ENCODE measurements at regions of chr6 and their contacts with region 1.

Region 1: DNA sequence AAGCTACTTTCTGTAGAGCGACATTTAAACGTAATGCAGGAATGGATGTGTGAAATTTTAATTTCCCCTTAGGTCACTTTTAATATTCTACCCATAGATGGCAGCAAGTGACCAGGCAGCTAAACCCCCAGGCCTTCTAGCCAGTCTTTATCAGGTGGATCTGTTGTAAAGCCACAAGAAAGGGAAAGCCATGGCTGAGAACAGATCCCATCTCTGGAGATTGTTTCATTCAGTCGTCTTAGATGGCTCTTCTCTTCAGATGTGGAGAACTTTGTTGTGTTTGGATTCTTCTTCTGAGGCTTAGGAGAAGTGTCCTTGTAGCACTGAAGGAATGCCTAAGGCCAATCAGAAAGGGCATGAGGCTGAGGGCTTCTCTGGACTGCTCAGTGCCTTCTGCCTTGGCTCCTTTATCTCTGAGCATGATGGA is 15.8 kb upstream of the RNF182 start:
- DNase-seq: peak; percentile 57 to 71 (median 67)
- H3K4me3 ChIP-seq: no peak overlapping the region
- H3K4me3 Mint-ChIP-seq: no peak overlapping the region
- H3K27ac ChIP-seq: no peak overlapping the region
- H3K27ac Mint-ChIP-seq: no peak overlapping the region
- H3K4me1 ChIP-seq: peaks cover 4% of the 10 kb centered on the region
- H3K4me1 Mint-ChIP-seq: peaks cover 0 to 6% (median 4%) of the 10 kb centered on the region in 4 donors
- H3K27me3 ChIP-seq: no peaks in the 10 kb centered on the region
- H3K27me3 Mint-ChIP-seq: peaks cover 18 to 21% of the 10 kb centered on the region in 2 donors

Region 2: GRCh38 chr6:13827032-13827431 is 81.9 kb before region 1 on chr6:
- CTCF ChIA-PET with region 1: no interaction called
- POLR2A ChIA-PET with region 1: no interaction called
- intact Hi-C with region 1: no loop called
- DNase-seq: no peak
- H3K4me3 ChIP-seq: no peak overlapping the region
- H3K4me3 Mint-ChIP-seq: no peak overlapping the region
- H3K27ac ChIP-seq: no peak overlapping the region
- H3K27ac Mint-ChIP-seq: no peak overlapping the region
- H3K4me1 ChIP-seq: no peaks in the 10 kb centered on the region
- H3K4me1 Mint-ChIP-seq: no peaks in the 10 kb centered on the region
- H3K27me3 ChIP-seq: no peaks in the 10 kb centered on the region
- H3K27me3 Mint-ChIP-seq: peaks cover 6 to 12% of the 10 kb centered on the region in 2 donors

Region 3: GRCh38 chr6:13924146-13924948 is 15.4 kb after region 1 on chr6:
- CTCF ChIA-PET with region 1: interaction called, 19 read pairs
- POLR2A ChIA-PET with region 1: no interaction called
- intact Hi-C with region 1: no loop called
- DNase-seq: peak; percentile 27 to 50 (median 35)
- H3K4me3 ChIP-seq: peak overlapping the region; percentile 24 to 36
- H3K4me3 Mint-ChIP-seq: peak overlapping the region; percentile 61 to 96 (median 86)
- H3K27ac ChIP-seq: no peak overlapping the region
- H3K27ac Mint-ChIP-seq: peak overlapping the region in 4 of 7 donors; percentile 22 to 85 (median 60)
- H3K4me1 ChIP-seq: peaks cover 15% of the 10 kb centered on the region
- H3K4me1 Mint-ChIP-seq: peaks cover 10 to 16% (median 14%) of the 10 kb centered on the region in 4 donors
- H3K27me3 ChIP-seq: peaks cover 35% of the 10 kb centered on the region
- H3K27me3 Mint-ChIP-seq: peaks cover 42 to 52% of the 10 kb centered on the region in 2 donors

Region 4: DNA sequence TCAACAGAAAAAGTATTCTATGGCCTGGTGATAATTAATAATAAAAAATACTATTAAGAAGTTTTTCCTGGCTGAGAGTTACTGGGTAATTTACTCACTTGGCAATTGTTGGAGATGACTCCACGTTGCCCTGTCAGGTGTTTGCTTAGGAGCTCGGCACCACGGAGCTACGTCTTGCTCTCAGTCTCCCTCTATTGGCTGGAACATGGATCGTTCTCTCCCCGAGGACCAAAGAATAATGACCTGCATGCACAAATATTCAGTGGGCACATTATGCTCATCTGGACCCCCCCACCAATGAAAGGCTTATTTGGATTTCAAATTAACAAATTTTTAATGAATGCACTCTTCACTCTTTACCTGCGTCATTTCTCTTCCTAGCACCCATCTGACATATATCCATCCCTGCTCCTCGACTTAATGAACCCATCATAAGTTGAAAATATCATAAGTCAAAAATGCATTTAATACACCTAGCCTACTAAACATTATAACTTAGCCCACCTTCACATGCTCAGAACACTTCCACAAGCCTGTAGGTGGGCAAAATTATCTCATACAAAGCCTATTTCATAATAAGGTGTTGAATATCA is 137.6 kb after region 1 on chr6:
- CTCF ChIA-PET with region 1: interaction called, 60 read pairs
- POLR2A ChIA-PET with region 1: interaction called, 3 read pairs
- intact Hi-C with region 1: loop called (anchors 1 kb)
- DNase-seq: peak; percentile 30 to 44 (median 37)
- H3K4me3 ChIP-seq: no peak overlapping the region
- H3K4me3 Mint-ChIP-seq: no peak overlapping the region
- H3K27ac ChIP-seq: no peak overlapping the region
- H3K27ac Mint-ChIP-seq: no peak overlapping the region
- H3K4me1 ChIP-seq: no peaks in the 10 kb centered on the region
- H3K4me1 Mint-ChIP-seq: peaks cover 0 to 1% (median 0%) of the 10 kb centered on the region in 4 donors
- H3K27me3 ChIP-seq: no peaks in the 10 kb centered on the region
- H3K27me3 Mint-ChIP-seq: peaks cover 19 to 26% of the 10 kb centered on the region in 2 donors